ENCODE measurements at regions of chr11 and their contacts with region 1.

Region 1: GRCh38 chr11:95254131-95254704 is 23.2 kb upstream of the SESN3 start:
- DNase-seq: peak; percentile 91
- ATAC-seq: peak; percentile 100
- H3K4me3 Mint-ChIP-seq: peak overlapping the region; percentile 79
- H3K27ac Mint-ChIP-seq: peak overlapping the region; percentile 91
- H3K4me1 Mint-ChIP-seq: peaks cover 47% of the 10 kb centered on the region
- H3K27me3 Mint-ChIP-seq: no peaks in the 10 kb centered on the region
- CTCF ChIP-seq: no peak

Region 2: GRCh38 chr11:95231127-95231880 is 22.9 kb before region 1 on chr11 and contains the start of gene SESN3:
- CTCF ChIA-PET with region 1: interaction called, 11 read pairs
- POLR2A ChIA-PET with region 1: interaction called, 10 read pairs
- intact Hi-C with region 1: loop called (anchors 1 kb)
- DNase-seq: peak; percentile 98
- ATAC-seq: peak; percentile 93
- H3K4me3 Mint-ChIP-seq: peak within 1 kb of the TSS; percentile 92
- H3K27ac Mint-ChIP-seq: peak within 1 kb of the TSS; percentile 78
- H3K4me1 Mint-ChIP-seq: peaks cover 39% of the 10 kb centered on the region
- H3K27me3 Mint-ChIP-seq: no peaks in the 10 kb centered on the region
- CTCF ChIP-seq: no peak
- total RNA-seq, gene SESN3: 19.4 to 19.5 TPM

Region 3: DNA sequence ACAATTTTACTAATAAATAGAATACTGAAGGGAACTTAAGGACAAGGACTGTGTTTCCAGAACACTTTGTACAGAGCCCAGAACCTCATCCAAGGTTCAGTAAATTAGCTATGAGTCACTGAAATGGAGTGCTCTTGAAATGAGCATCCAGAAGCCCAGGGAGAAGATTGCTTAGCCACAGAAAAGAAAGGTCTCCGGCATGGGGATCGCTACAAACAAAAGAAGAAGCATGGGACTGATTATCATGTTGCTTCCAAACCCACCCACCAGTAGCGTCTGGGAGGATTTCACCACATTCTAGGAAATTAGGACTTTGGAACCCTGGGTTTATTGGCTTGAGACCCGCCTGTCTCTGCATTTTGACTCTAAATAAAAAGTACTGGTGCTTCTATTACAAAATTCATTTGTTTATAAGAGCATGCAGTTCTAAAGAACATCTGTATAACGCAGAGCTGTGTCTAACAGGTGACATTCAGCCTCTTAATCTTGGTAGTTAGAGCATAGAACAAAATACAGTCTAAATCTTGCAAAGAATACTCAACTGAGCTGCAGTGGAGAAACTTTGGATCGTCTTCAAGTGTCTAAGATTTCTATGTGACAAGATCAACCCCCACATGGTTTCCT is 12.6 kb after region 1 on chr11:
- CTCF ChIA-PET with region 1: interaction called, 12 read pairs
- POLR2A ChIA-PET with region 1: interaction called, 3 read pairs
- intact Hi-C with region 1: no loop called
- DNase-seq: no peak
- ATAC-seq: no peak
- H3K4me3 Mint-ChIP-seq: no peak overlapping the region
- H3K27ac Mint-ChIP-seq: no peak overlapping the region
- H3K4me1 Mint-ChIP-seq: peaks cover 9% of the 10 kb centered on the region
- H3K27me3 Mint-ChIP-seq: no peaks in the 10 kb centered on the region
- CTCF ChIP-seq: no peak